ENCODE measurements at regions of chr19 and their contacts with region 1.

Region 1: GRCh38 chr19:54674021-54674617 is 11.3 kb downstream of the LILRB4 start:
- DNase-seq: peak; percentile 30
- H3K4me3 ChIP-seq: no peak overlapping the region
- H3K27ac ChIP-seq: no peak overlapping the region
- H3K4me1 ChIP-seq: no peaks in the 10 kb centered on the region
- H3K27me3 ChIP-seq: no peaks in the 10 kb centered on the region
- CTCF ChIP-seq: peak; percentile 62 to 71
- POLR2A ChIP-seq: no peak

Region 2: GRCh38 chr19:54364775-54365257 is 309.3 kb before region 1 on chr19 and contains the start of gene LAIR1:
- CTCF ChIA-PET with region 1: no interaction called
- POLR2A ChIA-PET with region 1: no interaction called
- dilution Hi-C with region 1: no loop called
- intact Hi-C with region 1: no loop called
- DNase-seq: no peak
- H3K4me3 ChIP-seq: no peak within 1 kb of the TSS
- H3K27ac ChIP-seq: no peak within 1 kb of the TSS
- H3K4me1 ChIP-seq: no peaks in the 10 kb centered on the region
- H3K27me3 ChIP-seq: no peaks in the 10 kb centered on the region
- CTCF ChIP-seq: no peak
- POLR2A ChIP-seq: no peak
- total RNA-seq, gene LAIR1: not detected in 2 replicates

Region 3: DNA sequence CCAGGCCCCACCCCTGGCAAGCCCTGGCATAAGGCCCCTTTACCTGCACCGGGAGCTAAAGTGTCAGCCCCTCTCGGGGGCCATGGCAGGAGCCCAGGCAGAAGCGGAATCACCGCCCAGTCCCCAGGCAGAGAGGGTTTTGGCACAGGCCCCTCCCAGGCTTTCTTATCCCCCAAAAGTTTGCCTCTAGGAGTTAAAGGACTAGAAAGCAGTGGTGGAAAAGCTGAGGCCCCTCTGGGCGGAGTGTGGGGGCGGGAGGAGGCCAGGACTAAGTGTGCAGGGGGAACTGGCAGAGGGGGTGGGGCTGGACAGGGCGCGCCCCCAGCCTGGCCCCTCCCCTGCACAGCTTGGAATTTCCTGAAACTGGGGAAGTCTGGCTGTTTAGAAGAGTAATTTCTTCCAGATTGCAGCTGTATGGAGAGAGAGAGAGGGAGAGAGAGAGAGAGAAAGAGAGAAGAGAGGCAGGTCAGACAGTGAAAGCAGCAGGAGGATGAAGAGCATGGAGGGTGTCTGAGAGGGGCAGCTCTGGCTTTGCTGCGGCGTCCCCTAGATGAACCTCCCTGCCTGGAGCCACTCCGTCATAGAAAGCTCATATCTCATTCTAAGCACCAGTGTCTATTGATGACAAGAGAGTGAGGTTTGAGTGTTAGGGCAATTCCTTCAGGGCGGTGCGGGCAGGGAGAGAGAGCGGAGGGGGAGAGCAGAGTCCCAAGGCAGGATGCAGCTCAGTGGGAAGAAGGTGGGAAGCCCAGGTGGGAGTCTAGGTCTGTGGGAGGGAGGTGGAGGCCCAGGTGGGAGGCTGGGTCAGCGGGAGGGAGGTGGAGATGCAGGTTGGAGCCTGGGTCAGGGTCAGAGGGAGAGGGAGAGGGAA is 200.9 kb before region 1 on chr19 and contains the start of gene CDC42EP5:
- CTCF ChIA-PET with region 1: interaction called, 12 read pairs
- POLR2A ChIA-PET with region 1: no interaction called
- dilution Hi-C with region 1: no loop called
- intact Hi-C with region 1: no loop called
- DNase-seq: peak; percentile 90
- H3K4me3 ChIP-seq: peak within 1 kb of the TSS; percentile 60 to 70 (median 65)
- H3K27ac ChIP-seq: peak within 1 kb of the TSS; percentile 68
- H3K4me1 ChIP-seq: peaks cover 35% of the 10 kb centered on the region
- H3K27me3 ChIP-seq: no peaks in the 10 kb centered on the region
- CTCF ChIP-seq: no peak
- POLR2A ChIP-seq: no peak
- total RNA-seq, gene CDC42EP5: 73.8 and 85.5 TPM in 2 replicates

Region 4: GRCh38 chr19:54481322-54481930 is 192.7 kb before region 1 on chr19:
- CTCF ChIA-PET with region 1: interaction called, 42 read pairs
- POLR2A ChIA-PET with region 1: no interaction called
- dilution Hi-C with region 1: no loop called
- intact Hi-C with region 1: loop called (anchors 1 kb)
- DNase-seq: peak; percentile 62
- H3K4me3 ChIP-seq: no peak overlapping the region
- H3K27ac ChIP-seq: no peak overlapping the region
- H3K4me1 ChIP-seq: no peaks in the 10 kb centered on the region
- H3K27me3 ChIP-seq: no peaks in the 10 kb centered on the region
- CTCF ChIP-seq: peak; percentile 68 to 79
- POLR2A ChIP-seq: no peak

Region 5: DNA sequence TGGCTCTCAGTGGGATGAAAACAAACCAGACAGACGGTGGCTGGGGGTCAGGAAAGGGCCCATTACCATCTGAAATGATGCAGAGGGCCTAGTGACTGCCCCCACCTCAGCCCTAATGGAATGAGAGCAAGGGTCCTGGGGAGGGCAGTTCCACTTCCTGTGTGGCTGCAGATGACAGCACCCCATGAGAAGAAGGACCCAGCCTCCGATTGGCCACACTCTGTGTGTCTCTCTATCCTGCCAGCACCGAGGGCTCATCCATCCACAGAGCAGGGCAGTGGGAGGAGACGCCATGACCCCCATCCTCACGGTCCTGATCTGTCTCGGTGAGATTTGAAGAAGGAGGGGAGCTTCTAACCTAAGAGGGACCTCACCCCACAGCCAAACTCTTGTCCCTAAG is 43.3 kb before region 1 on chr19:
- CTCF ChIA-PET with region 1: no interaction called
- POLR2A ChIA-PET with region 1: no interaction called
- dilution Hi-C with region 1: no loop called
- intact Hi-C with region 1: no loop called
- DNase-seq: no peak
- H3K4me3 ChIP-seq: no peak overlapping the region
- H3K27ac ChIP-seq: no peak overlapping the region
- H3K4me1 ChIP-seq: no peaks in the 10 kb centered on the region
- H3K27me3 ChIP-seq: no peaks in the 10 kb centered on the region
- CTCF ChIP-seq: no peak
- POLR2A ChIP-seq: no peak

Region 6: GRCh38 chr19:54653181-54653809 is 20.8 kb before region 1 on chr19:
- CTCF ChIA-PET with region 1: interaction called, 28 read pairs
- POLR2A ChIA-PET with region 1: no interaction called
- dilution Hi-C with region 1: no loop called
- intact Hi-C with region 1: no loop called
- DNase-seq: peak; percentile 22
- H3K4me3 ChIP-seq: no peak overlapping the region
- H3K27ac ChIP-seq: no peak overlapping the region
- H3K4me1 ChIP-seq: no peaks in the 10 kb centered on the region
- H3K27me3 ChIP-seq: no peaks in the 10 kb centered on the region
- CTCF ChIP-seq: peak; percentile 29 to 31
- POLR2A ChIP-seq: no peak

Region 7: DNA sequence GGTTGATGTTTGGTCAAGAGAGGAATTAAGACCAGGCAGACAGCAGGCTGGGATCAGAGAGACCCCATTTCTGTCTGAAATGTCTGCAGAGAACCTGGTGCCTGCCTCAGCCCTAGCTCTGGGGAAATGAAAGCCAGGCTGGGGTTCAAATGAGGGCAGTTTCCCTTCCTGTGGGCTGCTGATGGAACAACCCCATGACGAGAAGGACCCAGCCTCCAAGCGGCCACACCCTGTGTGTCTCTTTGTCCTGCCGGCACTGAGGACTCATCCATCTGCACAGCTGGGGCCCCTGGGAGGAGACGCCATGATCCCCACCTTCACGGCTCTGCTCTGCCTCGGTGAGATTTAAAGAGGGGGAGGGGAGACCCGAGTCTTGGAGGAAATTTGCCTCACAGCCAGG is 11.4 kb before region 1 on chr19 and contains the start of gene LILRB4:
- CTCF ChIA-PET with region 1: interaction called, 12 read pairs
- POLR2A ChIA-PET with region 1: no interaction called
- dilution Hi-C with region 1: no loop called
- intact Hi-C with region 1: no loop called
- DNase-seq: no peak
- H3K4me3 ChIP-seq: no peak within 1 kb of the TSS
- H3K27ac ChIP-seq: no peak within 1 kb of the TSS
- H3K4me1 ChIP-seq: no peaks in the 10 kb centered on the region
- H3K27me3 ChIP-seq: no peaks in the 10 kb centered on the region
- CTCF ChIP-seq: no peak
- POLR2A ChIP-seq: no peak
- total RNA-seq, gene LILRB4: not detected in 2 replicates

Region 8: DNA sequence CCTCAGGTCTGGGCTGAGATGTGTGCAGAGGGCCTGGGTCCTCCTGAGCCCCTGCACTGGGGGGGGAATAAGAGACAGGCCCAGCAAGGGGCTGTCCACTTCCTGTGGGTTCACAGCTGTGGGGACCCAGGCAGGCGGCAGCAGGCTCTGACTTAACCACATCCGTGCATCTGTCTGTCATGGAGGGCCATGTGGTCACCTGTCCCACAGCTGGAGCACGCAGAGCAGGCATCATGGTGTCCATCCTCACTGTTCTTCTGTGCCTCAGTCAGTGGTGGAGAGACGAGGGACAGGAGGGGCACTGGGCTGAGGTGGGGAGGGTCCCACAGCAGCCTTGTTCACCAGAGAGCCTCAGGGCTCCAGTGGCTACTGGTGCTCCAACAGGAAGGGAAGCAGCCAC is 33.8 kb after region 1 on chr19:
- CTCF ChIA-PET with region 1: no interaction called
- POLR2A ChIA-PET with region 1: no interaction called
- dilution Hi-C with region 1: no loop called
- intact Hi-C with region 1: no loop called
- DNase-seq: no peak
- H3K4me3 ChIP-seq: no peak overlapping the region
- H3K27ac ChIP-seq: no peak overlapping the region
- H3K4me1 ChIP-seq: no peaks in the 10 kb centered on the region
- H3K27me3 ChIP-seq: no peaks in the 10 kb centered on the region
- CTCF ChIP-seq: no peak
- POLR2A ChIP-seq: no peak

Region 9: DNA sequence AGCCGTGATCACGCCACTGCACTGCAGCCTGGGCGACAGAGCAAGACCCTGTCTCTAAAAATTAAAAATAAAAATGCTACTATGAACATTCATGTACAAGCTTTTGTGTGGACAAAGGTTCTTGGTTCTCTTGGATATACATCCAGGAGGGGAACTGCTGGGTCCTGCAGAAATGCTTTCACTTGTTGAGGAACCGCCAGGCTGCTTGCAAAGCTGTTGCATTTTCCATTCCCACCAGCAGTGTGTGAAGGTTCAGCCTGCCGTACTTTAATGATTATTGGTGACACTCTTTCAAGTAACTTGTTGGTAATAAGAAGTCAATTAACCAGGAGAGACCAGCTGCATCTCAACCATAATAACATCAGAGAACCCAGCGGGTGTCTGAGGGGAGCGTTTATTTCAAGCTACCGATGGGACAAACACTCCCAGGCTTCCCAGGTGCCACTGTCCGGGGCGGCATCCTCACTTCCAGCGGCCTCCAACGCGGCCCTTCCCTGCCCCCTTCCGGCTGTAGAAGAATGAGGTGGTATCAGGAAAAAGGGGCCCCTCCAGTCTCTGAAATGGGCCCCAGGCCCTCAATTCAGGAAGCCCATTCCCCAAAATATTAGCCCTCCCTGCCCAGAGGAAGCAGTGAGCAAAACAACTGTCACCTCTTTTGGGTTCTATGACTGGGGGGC is 458.5 kb after region 1 on chr19:
- CTCF ChIA-PET with region 1: interaction called, 12 read pairs
- POLR2A ChIA-PET with region 1: no interaction called
- dilution Hi-C with region 1: no loop called
- intact Hi-C with region 1: loop called (anchors 10 kb)
- DNase-seq: no peak
- H3K4me3 ChIP-seq: no peak overlapping the region
- H3K27ac ChIP-seq: no peak overlapping the region
- H3K4me1 ChIP-seq: no peaks in the 10 kb centered on the region
- H3K27me3 ChIP-seq: peaks cover 0 to 4% of the 10 kb centered on the region in 2 experiments
- CTCF ChIP-seq: peak; percentile 15 to 23
- POLR2A ChIP-seq: no peak

Measured in endothelial cell of umbilical vein (primary cell).